Testis (tissue), 5 donors: ENCODE measurements at regions of chr1 and their contacts with region 1.

Region 1: GRCh38 chr1:111481387-111482221 is 7.8 kb downstream of the C1orf162 start:
- DNase-seq: peak; percentile 82
- H3K4me3 ChIP-seq: no peak overlapping the region
- H3K27ac ChIP-seq: no peak overlapping the region
- H3K4me1 ChIP-seq: peaks cover 8% of the 10 kb centered on the region
- H3K27me3 ChIP-seq: no peaks in the 10 kb centered on the region
- CTCF ChIP-seq: peak; percentile 42 to 70 (median 50)
- POLR2A ChIP-seq: no peak

Region 2: GRCh38 chr1:111334169-111334568 is 147.4 kb before region 1 on chr1:
- intact Hi-C with region 1: no loop called
- DNase-seq: peak; percentile 47
- H3K4me3 ChIP-seq: no peak overlapping the region
- H3K27ac ChIP-seq: no peak overlapping the region
- H3K4me1 ChIP-seq: no peaks in the 10 kb centered on the region
- H3K27me3 ChIP-seq: no peaks in the 10 kb centered on the region
- CTCF ChIP-seq: peak in 2 of 3 experiments; percentile 14 to 26
- POLR2A ChIP-seq: no peak

Region 3: GRCh38 chr1:111690306-111690617 is 208.7 kb after region 1 on chr1:
- intact Hi-C with region 1: no loop called
- DNase-seq: peak; percentile 73
- H3K4me3 ChIP-seq: no peak overlapping the region
- H3K27ac ChIP-seq: peak overlapping the region in 1 of 2 donors; percentile 39
- H3K4me1 ChIP-seq: no peaks in the 10 kb centered on the region
- H3K27me3 ChIP-seq: no peaks in the 10 kb centered on the region
- CTCF ChIP-seq: no peak
- POLR2A ChIP-seq: no peak

Region 4: DNA sequence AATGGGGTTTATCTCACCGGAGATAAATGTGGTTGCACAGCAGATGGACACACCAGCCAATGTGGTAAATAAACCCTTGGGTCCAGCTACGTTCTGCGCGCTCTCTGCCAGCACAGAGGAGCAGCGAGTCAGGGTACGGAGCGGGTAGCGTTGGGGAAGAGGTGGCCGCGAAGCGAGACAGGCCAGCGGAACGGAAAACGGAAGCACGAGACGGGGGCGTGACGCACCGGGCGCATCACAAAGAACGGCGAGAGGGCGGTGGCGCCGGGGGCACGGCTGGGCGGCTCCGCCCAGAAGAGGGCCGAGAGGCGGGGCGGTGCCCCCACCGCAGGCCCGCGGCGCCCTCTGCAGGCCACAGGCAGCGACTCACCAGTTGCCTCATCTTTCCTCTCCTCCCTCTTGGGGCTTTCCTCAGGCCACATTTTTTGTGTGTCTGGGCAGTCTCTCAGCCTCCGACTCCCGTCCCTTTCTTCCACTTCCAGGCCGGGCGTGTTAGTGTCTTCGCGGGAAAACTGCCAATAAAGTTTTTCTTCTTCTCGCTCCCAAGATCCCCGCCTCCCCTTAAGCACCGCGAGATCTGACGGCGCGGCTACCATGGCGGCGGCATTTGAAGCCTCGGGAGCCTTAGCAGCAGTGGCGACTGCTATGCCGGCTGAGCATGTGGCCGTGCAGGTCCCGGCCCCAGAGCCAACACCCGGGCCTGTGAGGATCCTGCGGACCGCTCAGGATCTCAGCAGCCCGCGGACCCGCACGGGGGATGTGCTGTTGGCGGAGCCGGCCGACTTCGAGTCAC is 273.9 kb after region 1 on chr1 and contains the start of gene DDX20:
- intact Hi-C with region 1: loop called (anchors 10 kb)
- DNase-seq: peak; percentile 95
- H3K4me3 ChIP-seq: peak within 1 kb of the TSS; percentile 91 to 98
- H3K27ac ChIP-seq: peak within 1 kb of the TSS; percentile 86 to 96
- H3K4me1 ChIP-seq: peaks cover 17% of the 10 kb centered on the region
- H3K27me3 ChIP-seq: no peaks in the 10 kb centered on the region
- CTCF ChIP-seq: peak; percentile 94 to 98 (median 97)
- POLR2A ChIP-seq: no peak
- total RNA-seq, gene DDX20: 86.3 to 168 TPM